ENCODE measurements at regions of chr12 and their contacts with region 1.

Region 1: GRCh38 chr12:127559349-127560040 is 707.5 kb upstream of the TMEM132C start:
- DNase-seq: no peak

Region 2: DNA sequence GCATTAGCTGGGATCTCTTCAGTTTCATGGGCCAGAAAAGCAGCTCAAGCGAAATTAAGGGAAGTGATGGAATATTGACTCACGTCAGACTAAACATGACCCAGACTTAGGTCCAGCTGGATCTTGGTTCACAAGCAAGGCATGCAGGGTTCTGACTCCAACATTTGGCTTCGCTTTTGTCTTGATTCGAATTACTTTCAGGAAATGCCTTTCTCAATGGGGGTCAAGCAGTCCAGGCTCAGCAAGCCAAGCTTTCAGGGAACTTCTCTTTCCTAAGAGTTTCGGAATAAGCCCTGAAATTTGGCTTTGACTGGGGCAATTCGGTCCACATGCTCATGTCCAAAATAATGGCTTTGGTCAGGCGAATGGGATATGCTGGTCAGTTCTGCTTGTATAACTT is 28.8 kb after region 1 on chr12:
- intact Hi-C with region 1: loop called in 1 of 2 experiments (anchors 2 kb)
- DNase-seq: no peak

Region 3: DNA sequence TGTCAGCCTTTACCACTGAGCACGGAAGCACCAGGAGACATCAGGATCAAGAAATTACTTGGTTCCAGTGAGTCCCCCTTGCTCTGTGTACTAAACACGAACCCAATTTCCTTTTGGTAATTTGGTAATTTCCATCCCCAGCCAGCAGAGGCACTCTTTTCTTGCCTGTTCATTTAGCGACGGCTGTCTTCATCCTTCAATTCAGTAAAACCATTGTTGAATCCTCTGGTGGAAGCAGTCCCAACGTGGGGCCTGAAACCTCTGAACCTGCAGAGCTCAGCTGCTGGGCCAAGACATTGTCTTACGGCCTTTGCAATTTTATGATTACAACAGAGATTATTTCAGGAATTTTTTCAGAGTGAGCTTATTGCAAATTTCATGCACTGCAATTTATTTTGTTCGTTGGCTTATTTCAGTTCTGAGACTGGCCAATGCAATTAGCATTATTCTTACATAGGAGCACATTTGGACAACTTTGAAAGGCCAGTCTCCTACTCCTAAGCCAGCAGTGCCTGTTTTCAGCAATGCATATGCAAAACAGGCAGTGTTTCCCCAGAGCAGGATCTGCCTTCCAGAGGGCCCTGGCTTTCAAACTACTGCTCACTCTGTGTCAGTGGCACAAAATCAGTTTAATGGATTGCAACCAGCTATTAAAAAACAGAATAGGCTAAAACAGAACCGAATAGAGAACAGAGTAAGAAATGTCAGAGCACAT is 334.6 kb after region 1 on chr12:
- intact Hi-C with region 1: no loop called
- DNase-seq: no peak

Region 4: GRCh38 chr12:128920468-128920867 is 1361.0 kb after region 1 on chr12:
- intact Hi-C with region 1: loop called in 1 of 2 experiments (anchors 5 kb)
- DNase-seq: no peak